ENCODE measurements at regions of chr7 and their contacts with region 1.

Region 1: GRCh38 chr7:64574540-64575126 is 11.8 kb upstream of the ZNF680 start:
- DNase-seq: no peak
- ATAC-seq: no peak
- H3K4me3 ChIP-seq: peak overlapping the region in 1 of 2 donors; percentile 32
- H3K4me3 Mint-ChIP-seq: peak overlapping the region in 2 of 3 donors; percentile 39 to 54
- H3K27ac ChIP-seq: no peak overlapping the region
- H3K27ac Mint-ChIP-seq: no peak overlapping the region
- H3K4me1 ChIP-seq: peaks cover 0 to 6% of the 10 kb centered on the region in 2 experiments
- H3K4me1 Mint-ChIP-seq: peaks cover 6 to 7% (median 7%) of the 10 kb centered on the region in 3 donors
- H3K27me3 ChIP-seq: peaks cover 0 to 24% of the 10 kb centered on the region in 2 experiments
- H3K27me3 Mint-ChIP-seq: peaks cover 5 to 21% of the 10 kb centered on the region in 2 donors

Region 2: GRCh38 chr7:64599355-64599754 is 24.7 kb after region 1 on chr7:
- CTCF ChIA-PET with region 1: interaction called in 1 of 2 experiments, 9 read pairs
- POLR2A ChIA-PET with region 1: interaction called in 1 of 2 experiments, 15 read pairs
- DNase-seq: no peak
- ATAC-seq: no peak
- H3K4me3 ChIP-seq: no peak overlapping the region
- H3K4me3 Mint-ChIP-seq: no peak overlapping the region
- H3K27ac ChIP-seq: no peak overlapping the region
- H3K27ac Mint-ChIP-seq: no peak overlapping the region
- H3K4me1 ChIP-seq: no peaks in the 10 kb centered on the region
- H3K4me1 Mint-ChIP-seq: no peaks in the 10 kb centered on the region
- H3K27me3 ChIP-seq: no peaks in the 10 kb centered on the region
- H3K27me3 Mint-ChIP-seq: no peaks in the 10 kb centered on the region

Region 3: GRCh38 chr7:64618785-64619456 is 44.3 kb after region 1 on chr7:
- CTCF ChIA-PET with region 1: no interaction called
- POLR2A ChIA-PET with region 1: no interaction called
- DNase-seq: peak in 6 of 35 experiments; percentile 4 to 77 (median 14)
- ATAC-seq: no peak
- H3K4me3 ChIP-seq: no peak overlapping the region
- H3K4me3 Mint-ChIP-seq: no peak overlapping the region
- H3K27ac ChIP-seq: no peak overlapping the region
- H3K27ac Mint-ChIP-seq: no peak overlapping the region
- H3K4me1 ChIP-seq: no peaks in the 10 kb centered on the region
- H3K4me1 Mint-ChIP-seq: peaks cover 0 to 2% (median 2%) of the 10 kb centered on the region in 3 donors
- H3K27me3 ChIP-seq: no peaks in the 10 kb centered on the region
- H3K27me3 Mint-ChIP-seq: no peaks in the 10 kb centered on the region